Activated T-helper 1 cell treated with anti-CD3 and anti-CD28 coated beads, Interleukin-12 subunit alpha, Interleukin-12 subunit beta, Interleukin-2, Interleukin-4 antibody, amounts not matched to agents 30 ng/mL and 10 ng/mL and 1 ng/mL, durations not matched to agents 14 hours and 24 hours and 36 hours (primary cell): ENCODE measurements at regions of chr18 and their contacts with region 1.

Region 1: GRCh38 chr18:63439334-63439733 is 17.1 kb upstream of the VPS4B start:
- DNase-seq: peak; percentile 19
- H3K4me3 Mint-ChIP-seq: no peak overlapping the region
- H3K27ac Mint-ChIP-seq: no peak overlapping the region
- H3K4me1 Mint-ChIP-seq: peaks cover 6% of the 10 kb centered on the region
- H3K27me3 Mint-ChIP-seq: peaks cover 23% of the 10 kb centered on the region

Region 2: GRCh38 chr18:62566199-62566598 is 873.1 kb before region 1 on chr18:
- intact Hi-C with region 1: no loop called
- DNase-seq: no peak
- H3K4me3 Mint-ChIP-seq: no peak overlapping the region
- H3K27ac Mint-ChIP-seq: peak overlapping the region; percentile 24
- H3K4me1 Mint-ChIP-seq: peaks cover 21% of the 10 kb centered on the region
- H3K27me3 Mint-ChIP-seq: no peaks in the 10 kb centered on the region

Region 3: DNA sequence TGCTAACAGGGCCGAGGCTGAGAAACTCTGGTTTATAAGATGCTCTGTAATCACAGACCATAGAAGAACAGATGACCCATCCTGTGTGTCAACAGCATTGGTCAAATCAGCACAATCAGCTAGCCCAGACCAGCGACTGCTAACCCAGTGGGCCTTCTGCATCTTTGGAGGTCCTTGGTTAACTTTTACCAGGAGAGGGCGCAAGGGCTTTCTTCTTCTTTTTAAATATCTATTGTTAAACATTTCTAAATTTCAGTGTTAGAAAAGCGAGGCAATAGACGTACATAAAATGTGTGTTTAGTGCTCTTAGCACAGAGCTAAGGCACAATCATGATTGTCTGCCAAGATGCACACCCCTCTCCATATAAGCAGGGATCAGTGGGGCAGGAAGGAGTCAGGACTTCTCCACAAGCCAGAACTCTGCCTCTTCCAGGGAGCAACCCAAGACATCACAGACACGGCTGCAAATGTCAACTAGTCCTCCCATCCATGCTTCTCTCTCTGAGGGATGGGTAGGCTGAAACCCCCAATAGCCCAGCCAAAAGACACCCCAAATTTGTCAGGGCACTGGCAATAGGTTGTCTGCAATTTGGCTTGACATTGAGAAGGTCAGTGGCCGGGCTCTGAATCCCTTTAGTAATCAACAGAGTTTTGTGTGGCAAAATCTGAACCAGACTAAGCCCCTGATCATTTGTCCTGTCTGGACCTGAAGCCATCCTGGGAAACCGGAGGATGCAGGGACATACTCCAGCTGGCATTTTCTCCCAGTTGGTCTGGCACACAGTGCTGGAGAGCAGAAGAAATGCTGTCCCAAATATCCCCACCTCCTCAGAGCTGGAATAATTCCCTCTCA is 308.0 kb before region 1 on chr18:
- intact Hi-C with region 1: loop called (anchors 1 kb)
- DNase-seq: peak; percentile 24
- H3K4me3 Mint-ChIP-seq: no peak overlapping the region
- H3K27ac Mint-ChIP-seq: peak overlapping the region; percentile 18
- H3K4me1 Mint-ChIP-seq: peaks cover 31% of the 10 kb centered on the region
- H3K27me3 Mint-ChIP-seq: no peaks in the 10 kb centered on the region

Region 4: DNA sequence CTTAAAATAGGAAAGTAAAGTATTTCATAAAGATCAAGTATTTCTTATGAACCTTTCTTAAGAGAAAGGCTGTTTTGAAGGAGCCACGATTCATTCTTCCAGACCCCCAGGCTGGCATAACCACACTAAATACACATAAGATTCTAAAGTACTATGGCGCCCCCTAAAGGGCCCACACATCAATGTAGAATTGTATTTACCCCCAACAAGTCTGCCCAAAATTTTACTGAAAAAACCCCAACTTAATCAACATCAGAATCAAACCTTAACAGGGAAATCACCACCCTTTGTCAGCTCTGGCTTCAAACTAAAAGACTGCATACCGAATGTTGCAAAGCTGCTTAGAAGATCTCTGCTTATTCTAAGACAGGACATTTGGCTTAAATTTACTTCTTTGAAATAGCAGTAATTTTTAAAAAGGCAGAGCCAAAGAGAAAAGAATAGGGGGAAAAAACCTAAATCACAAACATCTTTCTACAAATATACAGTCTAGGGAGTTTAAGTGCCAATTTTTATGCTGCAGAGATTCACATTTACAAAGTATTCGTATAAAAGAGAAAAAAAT is 99.3 kb before region 1 on chr18:
- intact Hi-C with region 1: loop called (anchors 1 kb)
- DNase-seq: peak; percentile 19
- H3K4me3 Mint-ChIP-seq: no peak overlapping the region
- H3K27ac Mint-ChIP-seq: no peak overlapping the region
- H3K4me1 Mint-ChIP-seq: peaks cover 19% of the 10 kb centered on the region
- H3K27me3 Mint-ChIP-seq: no peaks in the 10 kb centered on the region

Region 5: DNA sequence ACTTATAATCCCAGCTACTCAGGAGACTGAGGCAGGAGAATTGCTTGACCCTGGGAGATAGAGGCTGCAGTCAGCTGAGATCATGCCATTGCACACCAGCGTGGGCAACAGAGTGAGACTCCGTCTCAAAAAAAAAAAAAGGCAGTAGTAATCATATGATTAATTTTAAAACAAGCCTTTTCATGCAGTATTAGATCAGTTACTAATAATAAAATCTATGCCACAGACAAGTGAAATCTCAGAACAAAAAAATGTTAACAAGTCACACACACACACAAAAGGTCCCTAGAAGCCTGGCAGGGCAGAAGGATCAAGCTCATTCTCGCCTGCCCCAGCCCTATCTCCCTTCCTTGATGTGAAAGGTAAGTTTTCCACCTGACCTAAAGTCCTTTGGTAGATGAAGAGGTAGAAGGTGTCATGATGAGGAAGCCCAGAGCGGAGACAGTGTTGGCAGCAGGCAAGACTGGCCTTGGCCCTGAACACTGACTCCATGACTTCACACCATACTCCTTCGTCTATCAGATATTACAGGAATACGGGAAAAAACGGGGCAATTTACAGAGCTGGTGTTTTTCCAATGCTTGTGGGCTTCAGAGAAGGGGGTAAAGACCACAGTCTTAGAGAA is 83.0 kb before region 1 on chr18:
- intact Hi-C with region 1: no loop called
- DNase-seq: no peak
- H3K4me3 Mint-ChIP-seq: no peak overlapping the region
- H3K27ac Mint-ChIP-seq: no peak overlapping the region
- H3K4me1 Mint-ChIP-seq: no peaks in the 10 kb centered on the region
- H3K27me3 Mint-ChIP-seq: no peaks in the 10 kb centered on the region

Region 6: DNA sequence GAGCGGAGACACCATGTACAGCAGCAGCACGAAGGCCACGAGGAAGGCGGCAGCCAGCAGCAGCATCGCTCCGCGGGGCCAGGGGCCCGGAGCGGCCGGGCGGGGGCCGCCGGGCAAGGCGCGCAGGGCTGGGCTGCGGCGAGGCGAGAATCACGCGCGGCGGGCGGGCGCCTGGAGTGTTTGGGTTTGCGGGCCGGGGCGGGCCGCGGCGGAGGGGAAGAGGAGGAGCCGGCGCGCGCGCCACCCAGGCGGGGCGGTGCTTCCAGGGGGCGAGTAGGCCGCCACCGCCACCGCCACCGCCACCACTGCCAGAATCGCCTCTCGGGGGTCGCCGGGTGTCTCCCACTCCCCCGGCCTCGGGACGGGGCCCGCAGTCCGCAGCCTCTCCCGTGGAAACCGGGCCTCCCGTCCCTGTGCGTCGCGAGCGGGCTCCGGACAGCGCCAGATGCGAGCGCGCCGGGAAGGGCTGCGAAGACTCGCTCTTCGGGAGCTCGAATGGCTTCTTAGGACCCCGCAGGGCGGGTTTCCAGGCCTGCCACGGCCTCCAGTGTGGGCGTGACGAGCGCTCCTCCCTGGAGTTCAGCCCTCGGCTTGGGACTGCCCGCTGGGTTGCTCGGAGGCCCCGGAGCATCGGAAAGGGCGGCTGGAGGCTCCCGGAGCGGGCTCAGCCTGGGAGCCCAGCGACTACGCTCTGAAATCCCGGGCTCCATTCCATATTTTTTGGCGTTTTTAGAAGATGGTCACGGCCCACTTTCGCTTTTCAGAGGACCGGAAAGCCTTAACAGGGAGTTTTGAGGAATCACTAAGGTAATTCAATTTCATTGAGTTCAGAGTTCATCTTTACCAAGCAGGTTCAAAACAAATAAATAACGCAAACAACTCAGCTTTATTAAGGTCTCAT is 72.0 kb before region 1 on chr18 and contains the start of gene KDSR:
- intact Hi-C with region 1: loop called (anchors 1 kb)
- DNase-seq: peak; percentile 82
- H3K4me3 Mint-ChIP-seq: peak within 1 kb of the TSS; percentile 93
- H3K27ac Mint-ChIP-seq: peak within 1 kb of the TSS; percentile 83
- H3K4me1 Mint-ChIP-seq: peaks cover 44% of the 10 kb centered on the region
- H3K27me3 Mint-ChIP-seq: no peaks in the 10 kb centered on the region
- total RNA-seq, gene KDSR: 72.2 and 83.5 TPM in 2 replicates

Region 7: DNA sequence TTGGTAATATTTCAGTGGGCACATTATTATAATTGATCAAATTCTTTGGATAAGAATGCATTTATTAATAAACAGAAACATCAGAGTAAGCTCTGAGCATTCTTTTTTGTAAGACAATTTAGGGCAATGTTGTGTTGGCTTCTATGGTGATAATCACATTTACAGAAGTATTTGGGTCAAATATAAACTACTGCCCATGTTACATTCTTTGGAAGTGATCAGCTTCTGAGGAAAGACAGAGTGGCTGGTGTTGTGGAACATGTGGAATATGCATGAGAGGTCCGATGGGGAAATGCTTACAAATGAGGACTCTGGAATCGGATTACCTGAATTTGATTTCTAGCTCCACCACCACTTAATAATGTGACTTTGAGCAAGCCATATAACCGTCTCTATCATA is 167.2 kb after region 1 on chr18:
- intact Hi-C with region 1: no loop called
- DNase-seq: no peak
- H3K4me3 Mint-ChIP-seq: no peak overlapping the region
- H3K27ac Mint-ChIP-seq: no peak overlapping the region
- H3K4me1 Mint-ChIP-seq: no peaks in the 10 kb centered on the region
- H3K27me3 Mint-ChIP-seq: no peaks in the 10 kb centered on the region